ENCODE measurements at regions of chr11 and their contacts with region 1.

Region 1: DNA sequence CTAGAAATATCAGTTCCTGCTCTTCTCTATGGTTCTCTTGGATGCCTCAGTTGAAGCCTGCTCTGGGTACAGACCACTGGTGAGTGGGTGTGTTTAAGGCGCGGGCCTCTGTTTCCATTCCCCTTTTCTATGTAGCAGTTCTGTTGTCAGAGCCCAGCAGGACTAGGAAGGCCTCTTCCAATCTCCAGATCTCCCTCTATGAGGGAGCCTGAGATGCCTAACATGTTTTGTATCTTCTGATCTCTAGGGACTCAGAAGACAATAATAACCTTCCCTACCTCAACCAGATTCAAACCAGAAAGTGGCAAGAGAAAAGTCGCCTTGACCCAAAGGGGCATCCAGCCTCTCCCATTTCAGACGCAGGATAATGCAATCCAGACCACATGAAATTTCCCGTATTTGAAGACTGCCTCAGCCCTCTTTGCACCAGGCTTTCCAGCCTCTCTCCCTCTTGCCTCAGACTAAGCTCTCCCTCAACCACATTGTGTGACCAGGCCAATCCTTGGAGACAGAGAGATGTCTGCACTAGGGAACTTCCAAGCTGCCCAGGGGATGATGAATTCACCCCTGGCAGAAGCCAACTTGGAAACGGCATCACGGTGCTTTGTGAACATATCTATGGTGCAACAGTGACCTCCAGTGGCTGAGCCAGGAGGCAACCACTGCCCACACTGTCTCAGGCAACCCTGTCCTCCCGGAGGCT is 150.1 kb upstream of the UBASH3B start:
- DNase-seq: peak; percentile 83 to 88 (median 85)
- H3K4me3 ChIP-seq: no peak overlapping the region
- H3K27ac ChIP-seq: no peak overlapping the region
- H3K4me1 ChIP-seq: peaks cover 4% of the 10 kb centered on the region
- H3K27me3 ChIP-seq: no peaks in the 10 kb centered on the region
- CTCF ChIP-seq: peak; percentile 60 to 84 (median 73)
- EP300 ChIP-seq: no peak
- POLR2A ChIP-seq: no peak

Region 2: GRCh38 chr11:122215244-122215992 is 290.0 kb before region 1 on chr11:
- intact Hi-C with region 1: loop called (anchors 5 to 10 kb)
- DNase-seq: peak; percentile 72 to 88 (median 75)
- H3K4me3 ChIP-seq: no peak overlapping the region
- H3K27ac ChIP-seq: no peak overlapping the region
- H3K4me1 ChIP-seq: peaks cover 2% of the 10 kb centered on the region
- H3K27me3 ChIP-seq: no peaks in the 10 kb centered on the region
- CTCF ChIP-seq: peak; percentile 46 to 87 (median 84)
- EP300 ChIP-seq: no peak
- POLR2A ChIP-seq: no peak

Region 3: DNA sequence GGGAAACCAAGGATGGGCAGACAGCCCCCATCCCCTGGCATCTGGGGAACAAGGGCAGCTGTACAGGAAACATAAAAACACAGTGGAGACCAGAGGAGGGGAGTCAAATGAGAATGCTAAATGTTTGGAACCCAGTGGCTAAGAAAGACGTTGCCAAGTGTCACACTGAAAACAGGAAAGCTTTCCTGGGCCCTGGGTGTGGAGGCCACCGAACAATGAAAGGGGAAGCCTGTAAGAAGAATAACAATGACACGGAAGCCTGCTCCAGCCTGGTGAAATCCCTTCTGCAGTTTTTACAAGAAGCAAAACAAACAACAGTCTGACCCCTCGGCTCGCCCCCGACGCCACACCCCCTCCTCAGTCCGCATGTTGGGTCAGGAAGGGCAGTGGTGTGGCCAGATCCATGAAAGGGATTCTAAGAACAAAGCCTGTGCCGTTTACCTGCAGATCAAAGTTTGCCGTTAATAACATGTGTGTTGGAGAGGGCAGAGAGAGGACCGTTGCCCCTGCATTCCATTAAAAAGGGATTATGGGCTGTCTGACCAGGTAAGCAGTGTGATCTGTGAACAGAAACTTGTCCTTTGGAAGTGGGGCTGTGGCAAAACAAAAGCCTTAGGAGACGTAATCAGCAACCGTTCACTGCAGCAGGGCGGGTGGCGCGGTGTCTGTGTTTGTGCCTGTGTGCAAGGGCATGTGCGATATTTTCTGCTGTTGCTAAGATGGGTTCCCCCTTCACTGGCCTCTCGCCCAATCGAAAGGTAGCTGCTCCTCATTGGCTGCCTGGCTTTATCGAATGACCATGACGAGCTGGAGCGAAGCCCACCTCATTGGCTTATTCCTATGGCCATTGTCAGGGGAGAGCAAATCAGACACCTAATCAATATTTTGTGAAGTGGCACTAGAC is 275.7 kb before region 1 on chr11:
- intact Hi-C with region 1: loop called in 2 of 4 experiments (anchors 5 to 10 kb)
- DNase-seq: no peak
- H3K4me3 ChIP-seq: no peak overlapping the region
- H3K27ac ChIP-seq: no peak overlapping the region
- H3K4me1 ChIP-seq: no peaks in the 10 kb centered on the region
- H3K27me3 ChIP-seq: no peaks in the 10 kb centered on the region
- CTCF ChIP-seq: no peak
- EP300 ChIP-seq: no peak
- POLR2A ChIP-seq: no peak

Region 4: GRCh38 chr11:122572592-122572991 is 67.1 kb after region 1 on chr11:
- intact Hi-C with region 1: no loop called
- DNase-seq: no peak
- H3K4me3 ChIP-seq: no peak overlapping the region
- H3K27ac ChIP-seq: no peak overlapping the region
- H3K4me1 ChIP-seq: no peaks in the 10 kb centered on the region
- H3K27me3 ChIP-seq: no peaks in the 10 kb centered on the region
- CTCF ChIP-seq: no peak
- EP300 ChIP-seq: no peak
- POLR2A ChIP-seq: no peak

Region 5: DNA sequence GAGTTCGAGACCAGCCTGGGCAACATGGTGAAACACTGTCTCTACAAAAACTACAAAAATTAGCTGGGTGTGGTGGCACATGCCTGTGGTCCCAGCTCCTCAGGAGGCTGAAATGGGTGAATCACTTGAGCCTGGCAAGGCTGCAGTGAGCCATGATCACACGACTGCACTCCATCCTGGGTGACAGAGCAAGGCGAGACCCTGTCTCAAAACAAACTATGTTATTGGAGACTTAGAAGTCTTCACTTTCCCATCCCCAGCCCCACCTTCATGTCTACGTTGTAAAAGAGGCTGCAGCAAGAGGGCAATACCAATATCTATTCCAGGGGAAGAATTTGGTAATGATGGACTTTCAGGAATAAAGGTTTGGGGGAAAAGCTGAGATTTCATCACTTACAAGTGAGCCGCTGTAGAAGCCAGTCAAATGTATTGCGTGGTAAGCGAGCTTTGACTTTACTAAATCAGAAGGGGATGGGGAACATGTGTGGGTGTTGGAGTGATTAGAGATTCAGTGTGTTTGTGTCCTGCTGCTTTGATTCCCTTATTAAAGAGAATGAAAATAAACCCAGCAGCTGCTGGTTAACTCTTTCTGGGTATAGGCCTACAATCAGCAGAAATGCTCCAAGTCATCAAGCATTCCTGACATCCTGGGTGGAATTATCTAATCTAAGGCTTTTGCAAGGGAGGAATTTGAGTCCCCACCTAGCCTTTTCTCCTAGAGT is 203.7 kb after region 1 on chr11:
- intact Hi-C with region 1: no loop called
- DNase-seq: no peak
- H3K4me3 ChIP-seq: no peak overlapping the region
- H3K27ac ChIP-seq: no peak overlapping the region
- H3K4me1 ChIP-seq: no peaks in the 10 kb centered on the region
- H3K27me3 ChIP-seq: no peaks in the 10 kb centered on the region
- CTCF ChIP-seq: no peak
- EP300 ChIP-seq: no peak
- POLR2A ChIP-seq: no peak